Activated CD4-positive, alpha-beta memory T cell treated with anti-CD3 and anti-CD28 coated beads for 36 hours (primary cell): ENCODE measurements at regions of chr5 and their contacts with region 1.

Region 1: DNA sequence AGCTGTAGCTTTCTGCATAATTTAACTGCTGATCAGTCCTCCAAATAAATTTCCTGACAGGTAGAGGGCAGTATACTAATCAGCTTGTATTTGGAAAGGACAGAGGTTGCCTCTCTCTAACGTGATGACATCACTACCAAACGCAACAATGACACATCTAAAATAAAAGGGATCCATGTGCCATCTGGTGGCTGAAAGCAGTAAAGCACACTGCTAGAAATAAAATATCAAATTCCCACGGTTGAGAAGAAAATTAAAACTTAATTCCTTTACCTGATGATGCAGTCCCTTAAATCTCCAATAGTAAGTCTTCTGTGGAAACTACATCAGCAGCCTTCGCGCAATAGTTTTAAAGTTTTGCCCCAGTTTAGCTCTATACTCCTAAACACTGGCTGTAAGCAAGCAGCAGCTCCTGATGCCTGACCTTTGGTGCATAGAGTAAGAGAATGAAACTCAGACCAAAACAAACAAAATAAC is 54.5 kb downstream of the DIAPH1 start:
- DNase-seq: peak; percentile 67
- H3K4me3 Mint-ChIP-seq: no peak overlapping the region
- H3K27ac Mint-ChIP-seq: peak overlapping the region; percentile 70
- H3K4me1 Mint-ChIP-seq: peaks cover 34% of the 10 kb centered on the region
- H3K27me3 Mint-ChIP-seq: no peaks in the 10 kb centered on the region

Region 2: GRCh38 chr5:141186897-141187512 is 377.2 kb before region 1 on chr5 and contains the start of gene PCDHB9:
- CTCF ChIA-PET with region 1: interaction called, 12 read pairs
- POLR2A ChIA-PET with region 1: no interaction called
- intact Hi-C with region 1: no loop called
- DNase-seq: peak; percentile 56
- H3K4me3 Mint-ChIP-seq: peak within 1 kb of the TSS; percentile 8
- H3K27ac Mint-ChIP-seq: no peak within 1 kb of the TSS
- H3K4me1 Mint-ChIP-seq: peaks cover 6% of the 10 kb centered on the region
- H3K27me3 Mint-ChIP-seq: peaks cover 44% of the 10 kb centered on the region
- total RNA-seq, gene PCDHB9: not detected

Region 3: GRCh38 chr5:141398608-141399007 is 165.6 kb before region 1 on chr5:
- CTCF ChIA-PET with region 1: interaction called, 13 read pairs
- POLR2A ChIA-PET with region 1: no interaction called
- intact Hi-C with region 1: no loop called
- DNase-seq: no peak
- H3K4me3 Mint-ChIP-seq: no peak overlapping the region
- H3K27ac Mint-ChIP-seq: no peak overlapping the region
- H3K4me1 Mint-ChIP-seq: no peaks in the 10 kb centered on the region
- H3K27me3 Mint-ChIP-seq: peaks cover 52% of the 10 kb centered on the region

Region 4: GRCh38 chr5:141475625-141476131 is 88.6 kb before region 1 on chr5 and contains the start of gene PCDHGC3:
- CTCF ChIA-PET with region 1: interaction called, 3 read pairs
- POLR2A ChIA-PET with region 1: no interaction called
- intact Hi-C with region 1: loop called (anchors 5 kb)
- DNase-seq: peak; percentile 72
- H3K4me3 Mint-ChIP-seq: peak within 1 kb of the TSS; percentile 79
- H3K27ac Mint-ChIP-seq: no peak within 1 kb of the TSS
- H3K4me1 Mint-ChIP-seq: peaks cover 20% of the 10 kb centered on the region
- H3K27me3 Mint-ChIP-seq: peaks cover 48% of the 10 kb centered on the region
- total RNA-seq, gene PCDHGC3: not detected

Region 5: DNA sequence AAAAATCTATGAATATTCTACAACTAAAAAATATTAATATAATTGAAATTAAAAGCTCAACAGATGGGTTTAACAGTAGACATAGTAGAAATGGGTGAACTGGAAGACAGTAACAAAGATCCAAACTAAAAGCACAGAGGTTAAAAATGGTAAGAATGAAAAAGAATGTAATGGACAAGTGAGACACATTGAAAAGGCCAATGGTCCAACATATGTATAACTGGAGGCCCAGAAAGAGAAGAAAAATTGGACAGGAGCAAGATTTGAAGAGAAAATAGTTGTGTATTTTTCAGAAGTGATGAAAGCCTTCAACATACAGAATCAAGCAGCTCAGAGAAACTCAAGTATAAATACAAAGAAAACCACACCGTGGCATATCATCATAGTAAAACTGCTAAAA is 16.8 kb before region 1 on chr5:
- CTCF ChIA-PET with region 1: interaction called, 15 read pairs
- POLR2A ChIA-PET with region 1: no interaction called
- intact Hi-C with region 1: no loop called
- DNase-seq: no peak
- H3K4me3 Mint-ChIP-seq: no peak overlapping the region
- H3K27ac Mint-ChIP-seq: no peak overlapping the region
- H3K4me1 Mint-ChIP-seq: peaks cover 21% of the 10 kb centered on the region
- H3K27me3 Mint-ChIP-seq: no peaks in the 10 kb centered on the region

Region 6: GRCh38 chr5:141605523-141606277 is 41.4 kb after region 1 on chr5:
- CTCF ChIA-PET with region 1: interaction called, 11 read pairs
- POLR2A ChIA-PET with region 1: no interaction called
- intact Hi-C with region 1: no loop called
- DNase-seq: peak; percentile 80
- H3K4me3 Mint-ChIP-seq: peak overlapping the region; percentile 76
- H3K27ac Mint-ChIP-seq: peak overlapping the region; percentile 97
- H3K4me1 Mint-ChIP-seq: peaks cover 81% of the 10 kb centered on the region
- H3K27me3 Mint-ChIP-seq: no peaks in the 10 kb centered on the region

Region 7: DNA sequence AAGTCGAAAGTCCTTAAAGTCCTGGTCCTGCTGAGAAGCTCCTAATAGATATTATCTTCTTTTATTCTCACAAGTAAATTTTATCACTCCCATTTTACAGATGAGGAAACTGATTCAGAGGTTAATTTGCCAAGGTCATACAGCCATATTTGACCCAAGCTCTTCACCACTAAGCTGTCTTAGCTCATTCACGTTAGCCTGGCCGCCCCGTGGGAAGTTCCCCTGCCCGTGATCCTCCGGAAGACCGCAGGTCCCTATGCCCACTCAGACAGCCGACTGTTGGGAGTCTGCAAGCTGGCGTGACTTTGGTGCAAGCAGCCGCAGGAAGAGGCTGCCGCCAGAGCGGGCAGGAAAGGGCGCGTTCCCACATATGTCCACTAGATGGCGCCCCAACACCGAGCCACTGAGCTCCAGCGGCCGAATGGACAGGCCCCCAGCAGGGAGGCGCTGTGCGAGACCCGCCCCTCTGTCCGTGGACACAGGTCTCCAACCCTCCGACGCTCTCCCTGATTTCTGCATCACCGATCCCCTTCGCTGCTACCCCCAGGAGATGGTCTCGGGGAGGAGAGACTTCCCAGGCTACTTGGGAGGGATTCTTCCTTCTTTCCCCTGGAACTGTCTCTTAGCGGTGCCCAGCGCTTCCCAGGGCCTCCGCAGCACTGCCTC is 127.7 kb after region 1 on chr5:
- CTCF ChIA-PET with region 1: interaction called, 13 read pairs
- POLR2A ChIA-PET with region 1: no interaction called
- intact Hi-C with region 1: no loop called
- DNase-seq: peak; percentile 93
- H3K4me3 Mint-ChIP-seq: peak overlapping the region; percentile 46
- H3K27ac Mint-ChIP-seq: no peak overlapping the region
- H3K4me1 Mint-ChIP-seq: peaks cover 25% of the 10 kb centered on the region
- H3K27me3 Mint-ChIP-seq: no peaks in the 10 kb centered on the region